PC-9 (cell line): ENCODE measurements at regions of chr1 and their contacts with region 1.

Region 1: DNA sequence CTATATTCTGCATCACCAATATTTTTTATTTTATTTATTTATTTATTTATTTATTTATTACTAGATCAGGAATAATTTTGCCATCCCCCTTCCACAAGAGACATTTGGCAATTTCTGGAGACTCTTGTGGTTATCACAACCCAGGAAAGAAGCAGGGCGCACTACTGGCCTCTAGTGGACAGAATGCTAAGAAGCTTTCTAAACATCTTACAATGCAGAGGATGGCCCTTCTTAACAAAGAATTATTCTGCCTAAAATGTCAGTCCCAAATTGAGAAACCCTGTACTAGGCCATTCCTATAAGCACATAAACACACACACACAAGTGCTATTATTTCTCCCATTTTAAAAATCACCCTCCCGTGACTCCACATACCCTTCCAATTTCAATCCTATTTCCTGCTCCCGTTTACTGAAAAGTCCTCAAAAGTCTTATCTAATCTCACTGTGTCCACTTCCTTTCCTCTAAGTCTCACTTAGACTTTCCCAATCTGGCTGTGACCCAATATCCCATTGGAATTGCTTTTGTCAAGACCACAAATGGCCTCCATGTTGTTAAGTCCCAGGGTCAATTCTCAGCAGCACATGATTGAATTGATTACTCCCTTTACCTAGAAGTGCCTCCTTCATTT is 43.7 kb upstream of the RNF11 start:
- DNase-seq: peak; percentile 60 to 65
- H3K4me3 ChIP-seq: no peak overlapping the region
- H3K27ac ChIP-seq: no peak overlapping the region
- H3K4me1 ChIP-seq: no peaks in the 10 kb centered on the region
- H3K27me3 ChIP-seq: no peaks in the 10 kb centered on the region
- CTCF ChIP-seq: peak; percentile 83

Region 2: DNA sequence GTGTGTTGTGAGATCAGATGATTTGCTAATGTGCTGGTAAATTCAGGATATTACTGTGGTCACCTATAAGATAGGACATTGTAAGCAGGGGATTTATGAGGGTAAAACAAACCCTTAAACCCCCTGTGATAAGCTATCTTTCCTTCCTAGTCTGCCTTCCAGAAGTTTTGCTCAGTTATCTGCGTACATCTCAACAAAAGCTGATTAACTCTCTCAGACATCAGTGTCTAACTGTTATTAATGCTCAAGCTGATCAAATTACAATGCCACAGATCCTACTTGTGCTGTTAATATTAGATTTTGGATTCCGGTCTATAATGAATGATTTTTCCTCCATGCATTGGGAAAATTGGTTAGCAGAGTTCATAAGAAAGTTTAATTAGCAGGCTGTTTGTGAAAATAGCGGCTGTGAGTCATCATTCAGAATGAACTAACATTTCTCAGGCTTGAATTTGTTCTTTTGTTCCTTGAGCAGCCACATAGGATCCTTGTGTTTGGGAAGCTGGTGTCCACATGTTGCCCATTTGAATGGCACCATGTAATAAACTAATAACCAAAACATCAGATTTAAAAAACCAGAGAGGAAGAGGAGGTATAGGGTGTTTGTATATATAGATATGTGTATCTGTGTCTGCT is 1034.9 kb before region 1 on chr1:
- CTCF ChIA-PET with region 1: no interaction called
- POLR2A ChIA-PET with region 1: interaction called, 11 read pairs
- intact Hi-C with region 1: no loop called
- DNase-seq: no peak
- H3K4me3 ChIP-seq: no peak overlapping the region
- H3K27ac ChIP-seq: no peak overlapping the region
- H3K4me1 ChIP-seq: no peaks in the 10 kb centered on the region
- H3K27me3 ChIP-seq: peaks cover 27% of the 10 kb centered on the region; the same call in 1 of the 2 replicates
- CTCF ChIP-seq: no peak

Region 3: GRCh38 chr1:50750021-50750619 is 442.2 kb before region 1 on chr1:
- CTCF ChIA-PET with region 1: no interaction called
- POLR2A ChIA-PET with region 1: no interaction called
- intact Hi-C with region 1: loop called (anchors 1 kb)
- DNase-seq: peak; percentile 13 to 36
- H3K4me3 ChIP-seq: no peak overlapping the region
- H3K27ac ChIP-seq: no peak overlapping the region
- H3K4me1 ChIP-seq: no peaks in the 10 kb centered on the region
- H3K27me3 ChIP-seq: no peaks in the 10 kb centered on the region
- CTCF ChIP-seq: peak; percentile 63

Region 4: DNA sequence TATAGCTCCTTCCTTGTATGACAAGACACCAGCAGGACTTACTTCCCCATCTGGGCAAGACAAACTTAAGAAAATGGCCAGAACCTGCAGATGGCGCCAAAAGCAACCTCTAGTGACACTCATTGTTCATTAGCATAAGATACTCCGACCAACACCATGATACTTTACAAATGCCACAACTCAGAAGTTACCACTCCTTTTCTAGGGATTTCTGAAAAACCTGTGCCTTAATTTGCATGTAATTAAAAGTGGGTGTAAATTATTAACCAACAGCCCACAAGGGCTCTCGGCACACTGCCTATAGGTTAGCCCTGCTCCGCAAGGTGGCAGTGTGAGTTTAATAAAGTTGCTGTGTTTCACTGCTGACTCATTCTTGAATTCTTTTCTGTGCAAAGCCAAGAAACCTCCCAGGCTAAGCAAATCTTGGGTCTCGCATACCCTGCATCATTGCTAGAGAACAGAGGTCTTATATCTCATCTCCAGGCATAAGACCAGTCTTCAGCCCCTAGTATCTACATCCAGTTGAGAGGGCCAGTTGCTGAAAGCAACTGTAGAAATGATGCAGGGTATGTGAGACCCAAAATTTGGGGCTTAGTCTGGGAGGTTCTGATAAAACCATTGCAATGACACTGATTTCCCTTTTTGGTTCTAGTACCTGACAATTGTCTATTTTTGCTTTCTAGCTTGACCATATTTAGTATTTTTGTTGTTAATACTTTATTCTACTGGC is 318.7 kb before region 1 on chr1:
- CTCF ChIA-PET with region 1: interaction called, 10 read pairs
- POLR2A ChIA-PET with region 1: no interaction called
- intact Hi-C with region 1: loop called (anchors 1 kb)
- DNase-seq: peak; percentile 49 to 63
- H3K4me3 ChIP-seq: no peak overlapping the region
- H3K27ac ChIP-seq: no peak overlapping the region
- H3K4me1 ChIP-seq: no peaks in the 10 kb centered on the region
- H3K27me3 ChIP-seq: no peaks in the 10 kb centered on the region
- CTCF ChIP-seq: peak; percentile 61; the same call in 1 of the 2 replicates

Region 5: GRCh38 chr1:50959913-50960844 is 232.1 kb before region 1 on chr1 and contains the start of gene FAF1:
- CTCF ChIA-PET with region 1: interaction called, 3 read pairs
- POLR2A ChIA-PET with region 1: no interaction called
- intact Hi-C with region 1: loop called (anchors 2 kb)
- DNase-seq: peak; percentile 98 to 99
- H3K4me3 ChIP-seq: peak within 1 kb of the TSS; percentile 85
- H3K27ac ChIP-seq: peak within 1 kb of the TSS; percentile 66
- H3K4me1 ChIP-seq: peaks cover 23% of the 10 kb centered on the region
- H3K27me3 ChIP-seq: no peaks in the 10 kb centered on the region
- CTCF ChIP-seq: peak; percentile 56
- total RNA-seq, gene FAF1: 99.2 and 105 TPM in 2 replicates

Region 6: GRCh38 chr1:51296383-51297357 is 104.3 kb after region 1 on chr1:
- CTCF ChIA-PET with region 1: interaction called, 4 read pairs
- POLR2A ChIA-PET with region 1: no interaction called
- intact Hi-C with region 1: loop called (anchors 1 kb)
- DNase-seq: peak; percentile 64 to 88
- H3K4me3 ChIP-seq: 0 out of 2 replicates have a peak overlapping the region, but pooled peaks have one; percentile 32
- H3K27ac ChIP-seq: no peak overlapping the region
- H3K4me1 ChIP-seq: no peaks in the 10 kb centered on the region; the same call in 1 of the 2 replicates
- H3K27me3 ChIP-seq: no peaks in the 10 kb centered on the region
- CTCF ChIP-seq: peak; percentile 97